Heart right ventricle (tissue), 16 donors: ENCODE measurements at regions of chr10 and their contacts with region 1.

Region 1: DNA sequence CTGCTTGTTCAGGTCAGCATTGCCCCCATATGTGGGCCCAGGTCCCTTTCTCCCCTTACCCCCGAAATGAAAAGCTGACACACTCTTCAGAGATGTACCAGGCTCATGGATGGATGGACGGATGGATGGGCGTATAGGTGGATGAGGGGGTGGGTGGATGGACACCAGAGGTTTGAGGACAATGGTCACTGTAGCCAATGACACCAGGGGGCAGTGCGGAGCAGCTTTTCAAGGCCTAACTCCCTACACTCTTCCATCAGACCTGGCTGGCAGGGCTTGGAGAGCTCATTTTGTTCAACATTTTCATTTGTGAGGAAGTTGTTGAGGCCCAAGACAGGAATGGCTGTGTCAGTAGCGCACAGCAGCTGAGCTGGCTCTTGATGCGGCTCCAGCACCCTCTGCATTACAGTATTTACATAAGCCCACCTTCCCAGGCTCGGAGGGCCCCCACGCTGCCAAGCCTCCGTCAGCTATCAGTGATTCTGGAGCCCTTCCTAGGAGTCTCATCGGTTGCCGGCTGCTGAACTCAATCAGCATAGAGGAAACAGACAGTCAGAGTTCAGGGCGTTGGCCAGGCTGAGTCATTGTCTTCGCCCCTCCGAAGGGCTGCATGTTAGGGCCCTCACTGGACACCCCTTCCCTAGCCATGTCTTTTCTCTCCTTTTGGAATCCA is 11.6 kb upstream of the FFAR4 start:
- DNase-seq: peak; percentile 66 to 70
- ATAC-seq: peak; percentile 65 to 91 (median 86)
- H3K4me3 ChIP-seq: no peak overlapping the region
- H3K27ac ChIP-seq: peak overlapping the region in 1 of 10 donors; percentile 21
- H3K4me1 ChIP-seq: peaks cover 0 to 5% (median 0%) of the 10 kb centered on the region in 9 donors
- H3K27me3 ChIP-seq: no peaks in the 10 kb centered on the region
- CTCF ChIP-seq: peak; percentile 44 to 80 (median 67)

Region 2: DNA sequence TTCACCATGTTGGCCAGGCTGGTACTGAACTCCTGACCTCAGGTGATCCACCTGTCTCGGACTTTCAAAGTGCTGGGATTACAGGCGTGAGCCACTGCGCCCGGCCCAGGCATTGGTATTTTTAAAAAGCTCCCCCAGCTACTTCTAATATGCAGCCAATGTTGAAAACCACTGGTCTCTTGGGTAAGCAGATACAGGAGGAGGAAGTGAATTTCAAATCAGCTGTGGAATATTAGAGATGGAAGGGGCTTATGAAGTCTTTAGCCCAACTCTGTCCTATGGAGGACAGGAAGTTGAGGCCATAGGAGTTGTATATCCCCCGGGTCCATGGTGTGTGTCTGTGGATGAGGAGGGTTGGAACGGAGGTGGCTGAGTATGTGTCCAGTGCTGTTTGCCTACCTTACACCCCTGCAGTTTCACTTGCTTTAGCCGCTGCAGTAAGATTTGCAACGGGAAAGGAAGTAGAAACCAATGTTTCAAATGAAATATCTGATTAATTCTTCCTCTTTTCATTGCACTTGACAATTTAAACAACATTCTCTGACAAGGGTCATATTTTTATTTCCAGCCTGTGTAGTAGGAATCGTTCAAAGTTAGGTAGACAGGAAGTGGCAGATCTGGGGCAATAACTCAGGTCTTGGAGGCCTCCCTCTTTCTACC is 60.8 kb after region 1 on chr10:
- intact Hi-C with region 1: no loop called
- DNase-seq: no peak
- ATAC-seq: no peak
- H3K4me3 ChIP-seq: peak overlapping the region in 1 of 10 donors; percentile 9
- H3K27ac ChIP-seq: peak overlapping the region in 1 of 10 donors; percentile 58
- H3K4me1 ChIP-seq: peaks cover 0 to 20% (median 0%) of the 10 kb centered on the region in 9 donors
- H3K27me3 ChIP-seq: no peaks in the 10 kb centered on the region
- CTCF ChIP-seq: no peak

Region 3: DNA sequence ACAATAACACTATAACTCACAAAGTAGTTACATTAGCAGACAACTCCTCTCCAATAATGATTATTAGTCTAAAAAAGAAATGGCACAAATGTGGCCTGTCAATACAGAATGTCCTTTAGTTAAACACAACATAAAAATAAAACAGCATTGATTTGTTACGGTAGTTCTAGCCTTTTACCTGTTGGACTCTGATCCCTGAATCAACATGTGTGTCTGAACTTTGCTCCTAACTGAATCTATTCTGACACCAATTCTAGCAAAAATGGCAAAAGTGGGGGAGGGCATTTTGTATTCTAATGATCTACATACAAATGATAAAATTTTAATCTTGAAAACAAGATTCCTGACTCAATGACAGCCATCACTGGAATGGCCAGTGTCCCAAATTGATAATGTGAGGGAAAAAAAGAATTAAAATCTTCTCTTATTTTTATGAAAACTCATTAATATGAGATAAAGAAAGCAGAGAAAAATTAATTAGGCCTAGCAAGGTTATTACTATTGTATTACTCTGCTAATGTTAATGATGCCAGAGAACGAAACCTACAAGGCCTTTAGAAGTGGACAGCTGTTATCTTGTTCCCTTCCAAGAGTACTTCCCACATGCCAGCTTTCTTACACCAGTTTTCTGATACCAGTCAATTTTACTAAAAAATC is 117.3 kb after region 1 on chr10:
- intact Hi-C with region 1: loop called in 4 of 10 experiments (anchors 5 to 10 kb)
- DNase-seq: no peak
- ATAC-seq: no peak
- H3K4me3 ChIP-seq: no peak overlapping the region
- H3K27ac ChIP-seq: no peak overlapping the region
- H3K4me1 ChIP-seq: no peaks in the 10 kb centered on the region
- H3K27me3 ChIP-seq: no peaks in the 10 kb centered on the region
- CTCF ChIP-seq: no peak

Region 4: DNA sequence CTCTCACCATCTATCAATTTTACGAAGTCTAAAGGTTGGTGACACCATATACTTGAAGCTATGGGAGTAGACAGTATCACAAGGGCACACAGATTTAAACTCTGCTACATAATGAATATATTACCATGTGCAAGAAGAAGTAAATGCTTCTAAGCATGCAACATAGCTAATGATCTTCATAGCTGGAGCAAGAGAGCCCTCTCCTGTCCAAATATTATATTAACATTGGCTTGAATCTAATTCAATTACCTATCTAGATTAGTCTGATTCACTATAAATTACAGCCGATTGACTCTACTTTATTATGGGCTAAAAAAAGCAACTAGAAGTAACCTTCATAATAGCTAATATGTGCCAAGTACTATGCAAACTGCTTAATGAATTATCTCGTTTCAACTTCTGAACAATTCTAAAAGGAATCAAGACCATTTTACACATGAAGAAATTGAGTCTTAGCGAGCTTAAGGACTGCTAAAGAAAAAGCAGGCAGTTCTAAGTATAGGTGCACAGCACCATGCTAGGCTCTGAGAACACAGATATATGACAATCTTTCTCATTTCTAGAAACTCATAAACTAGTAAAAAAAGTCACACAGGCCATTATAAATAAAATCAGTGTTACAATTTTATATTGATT is 125.6 kb after region 1 on chr10:
- intact Hi-C with region 1: loop called in 9 of 10 experiments (anchors 5 to 10 kb)
- DNase-seq: no peak
- ATAC-seq: peak in 3 of 8 donors; percentile 23 to 81 (median 25)
- H3K4me3 ChIP-seq: no peak overlapping the region
- H3K27ac ChIP-seq: no peak overlapping the region
- H3K4me1 ChIP-seq: peaks cover 0 to 11% (median 0%) of the 10 kb centered on the region in 9 donors
- H3K27me3 ChIP-seq: no peaks in the 10 kb centered on the region
- CTCF ChIP-seq: peak in 7 of 9 donors; percentile 20 to 56 (median 51)